Left cardiac atrium (tissue), 4 donors: ENCODE measurements at regions of chr5 and their contacts with region 1.

Region 1: GRCh38 chr5:44774279-44774880 is 34.4 kb upstream of the MRPS30 start:
- DNase-seq: no peak
- ATAC-seq: no peak

Region 2: GRCh38 chr5:44454002-44454401 is 320.4 kb before region 1 on chr5:
- intact Hi-C with region 1: no loop called
- DNase-seq: no peak
- ATAC-seq: no peak

Region 3: DNA sequence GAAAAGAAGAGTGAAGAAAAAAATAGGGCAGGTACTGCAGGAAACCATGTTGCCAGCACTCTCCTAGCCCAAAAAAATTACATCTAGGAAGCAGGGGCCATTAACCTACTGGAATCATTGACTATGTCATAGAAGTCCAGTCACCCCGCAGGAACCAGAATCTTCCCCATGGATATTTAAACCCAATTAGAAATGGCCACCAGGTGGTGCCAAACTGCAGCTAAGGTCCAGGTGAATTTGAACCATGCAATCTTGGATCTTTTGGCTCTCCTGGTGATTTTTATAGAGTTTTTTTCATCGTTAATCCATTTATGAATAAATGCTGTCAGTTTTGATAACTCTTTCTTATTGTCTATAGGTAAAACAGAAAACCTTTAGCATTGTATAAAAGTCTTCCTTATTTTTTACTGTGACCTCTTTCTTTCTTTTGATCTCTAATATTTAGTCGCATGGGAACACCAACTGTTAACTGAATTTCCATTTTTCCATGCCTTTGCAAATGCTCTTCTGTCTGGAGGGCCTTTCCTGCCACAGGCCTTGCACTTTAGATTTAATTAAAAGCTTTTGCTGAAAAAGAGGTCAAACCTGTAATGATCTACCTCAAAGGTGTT is 237.6 kb before region 1 on chr5:
- intact Hi-C with region 1: loop called (anchors 2 to 5 kb)
- DNase-seq: peak; percentile 28
- ATAC-seq: no peak

Region 4: GRCh38 chr5:44691812-44692211 is 82.6 kb before region 1 on chr5:
- intact Hi-C with region 1: no loop called
- DNase-seq: no peak
- ATAC-seq: no peak